GM10248 (cell line): ENCODE measurements at regions of chr7 and their contacts with region 1.

Region 1: DNA sequence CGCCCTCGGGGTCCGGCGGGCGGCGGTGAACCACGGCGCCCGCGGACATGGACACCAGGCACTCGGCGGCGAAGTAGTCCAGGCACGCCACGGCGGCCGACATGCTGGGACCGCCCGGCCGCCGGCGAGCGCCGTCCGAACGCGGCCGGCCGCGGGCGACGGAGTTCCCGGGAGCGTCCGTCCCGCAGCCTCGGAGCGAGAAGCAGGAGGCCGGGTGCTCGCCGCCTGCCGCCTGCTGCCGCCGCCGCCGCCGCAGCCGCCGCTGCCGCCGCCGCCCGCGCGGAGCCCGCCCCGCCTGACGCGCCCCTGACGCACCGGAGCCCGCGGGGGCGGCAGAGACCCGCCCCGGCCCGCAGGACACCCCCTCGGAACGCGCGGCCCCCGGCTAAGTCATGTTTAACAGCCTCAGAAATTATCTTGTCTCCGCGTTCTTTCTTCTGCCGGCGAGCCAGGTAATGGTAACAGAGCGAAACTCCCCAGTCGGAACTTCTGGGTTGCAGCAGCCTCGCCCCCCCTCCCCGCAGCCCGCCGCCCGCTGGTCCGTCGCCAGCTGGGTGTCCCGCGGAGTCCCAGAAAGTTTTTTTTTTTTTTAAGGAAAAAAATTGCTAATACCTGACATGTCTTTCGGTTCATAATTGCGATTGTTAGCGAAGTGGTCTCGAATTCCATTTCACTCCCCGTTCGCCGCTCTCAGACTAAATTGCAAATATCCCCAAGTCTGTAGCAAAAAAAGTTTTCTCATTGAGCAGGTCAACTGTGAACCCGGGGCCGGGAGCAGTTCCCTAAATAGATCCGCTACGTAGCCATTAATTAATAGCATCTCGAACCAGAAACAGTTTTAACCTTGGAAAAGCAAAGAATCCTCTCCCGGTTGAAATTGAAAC is at the start of gene KLF14:
- DNase-seq: peak; percentile 64
- CTCF ChIP-seq: no peak

Region 2: DNA sequence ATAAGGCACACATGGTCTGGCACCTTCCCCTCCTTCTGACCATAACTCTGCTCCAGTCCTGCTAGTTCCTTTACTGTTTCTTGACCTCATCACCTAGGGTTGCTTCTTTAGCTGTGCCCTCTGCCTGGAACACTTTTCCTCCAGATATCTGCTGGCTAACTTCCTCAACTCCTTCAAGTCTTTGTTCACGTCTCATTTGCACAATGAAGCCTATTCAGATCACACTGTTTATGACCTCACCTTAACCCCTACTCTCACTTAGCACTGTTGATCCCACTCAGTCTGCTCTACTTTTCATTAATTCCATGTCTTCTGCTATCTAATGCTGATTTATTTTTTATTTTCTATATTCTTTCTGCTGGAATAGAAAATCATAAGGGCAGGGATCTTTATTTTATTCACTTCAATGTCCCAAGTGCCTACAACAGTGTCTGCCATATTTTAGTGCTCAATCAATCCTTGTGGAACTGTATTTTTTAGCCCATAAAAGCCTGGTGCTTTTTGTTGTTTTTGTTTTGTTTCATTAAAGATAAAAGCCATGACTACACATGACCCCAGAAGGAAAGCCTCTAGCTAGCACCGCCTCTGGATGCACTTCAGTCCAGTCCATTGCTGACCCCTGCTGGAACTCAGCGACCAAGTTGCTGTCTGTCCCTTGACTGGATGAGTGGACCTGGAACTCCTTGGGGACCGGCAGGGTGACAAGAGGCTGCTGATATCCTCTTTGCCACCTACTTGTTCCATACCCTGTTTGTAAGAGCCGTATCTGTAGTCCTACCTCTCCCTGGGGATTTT is 12.5 kb before region 1 on chr7:
- CTCF ChIA-PET with region 1: interaction called, 10 read pairs
- POLR2A ChIA-PET with region 1: no interaction called
- DNase-seq: peak; percentile 26
- CTCF ChIP-seq: peak; percentile 37